PC-9 (cell line): ENCODE measurements at regions of chr22 and their contacts with region 1.

Region 1: DNA sequence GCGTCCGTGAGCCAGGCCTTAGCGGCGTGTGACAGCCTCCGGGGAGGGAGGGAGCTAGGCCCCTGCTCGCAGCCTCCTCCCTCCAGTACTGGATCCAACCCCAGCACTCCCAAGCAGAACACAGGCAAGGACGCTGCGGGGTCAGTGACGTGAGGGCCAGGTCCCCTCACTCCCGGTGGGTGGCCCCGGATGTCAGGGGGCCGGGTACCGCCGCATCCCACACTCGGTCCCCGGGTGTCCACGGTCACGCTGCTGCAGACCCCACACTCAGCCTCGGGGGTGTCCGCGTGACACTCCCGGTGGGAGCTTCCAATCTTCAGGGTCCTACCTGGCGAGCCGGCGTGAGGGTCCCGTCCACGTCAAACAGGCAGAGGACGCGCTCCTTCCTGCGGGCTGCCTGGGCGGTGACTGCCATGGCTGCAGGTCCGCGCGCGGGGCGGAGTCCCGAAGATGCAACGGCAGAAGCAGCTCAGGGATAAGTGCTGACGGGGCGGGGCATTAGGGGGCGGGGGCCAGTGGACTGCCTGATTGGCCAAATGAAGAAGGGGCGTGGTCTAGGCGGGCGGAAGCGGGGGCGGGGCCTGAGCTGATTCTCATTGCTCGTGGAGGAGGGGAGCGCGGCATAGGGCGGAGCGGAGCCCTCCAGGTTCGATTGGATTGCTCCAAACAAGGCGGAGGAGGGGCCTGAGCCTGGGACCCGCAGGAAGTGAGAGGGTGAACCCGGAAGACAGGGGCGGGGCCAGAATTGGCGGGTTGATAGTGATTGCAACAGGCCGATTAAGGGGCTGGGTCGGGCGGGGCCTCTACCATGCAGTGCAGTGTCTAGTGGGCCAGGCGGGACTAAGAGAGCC is at the start of gene PMM1:
- DNase-seq: peak; percentile 99 to 100
- H3K4me3 ChIP-seq: peak within 1 kb of the TSS; percentile 98
- H3K27ac ChIP-seq: peak within 1 kb of the TSS; percentile 37; the same call in 1 of the 2 replicates
- H3K4me1 ChIP-seq: peaks cover 18% of the 10 kb centered on the region
- H3K27me3 ChIP-seq: no peaks in the 10 kb centered on the region
- CTCF ChIP-seq: no peak
- total RNA-seq, gene PMM1: 49.3 and 53.1 TPM in 2 replicates

Region 2: GRCh38 chr22:41334215-41334614 is 255.4 kb before region 1 on chr22:
- CTCF ChIA-PET with region 1: interaction called, 14 read pairs
- POLR2A ChIA-PET with region 1: no interaction called
- intact Hi-C with region 1: no loop called
- DNase-seq: no peak
- H3K4me3 ChIP-seq: no peak overlapping the region
- H3K27ac ChIP-seq: no peak overlapping the region
- H3K4me1 ChIP-seq: no peaks in the 10 kb centered on the region
- H3K27me3 ChIP-seq: no peaks in the 10 kb centered on the region
- CTCF ChIP-seq: no peak

Region 3: DNA sequence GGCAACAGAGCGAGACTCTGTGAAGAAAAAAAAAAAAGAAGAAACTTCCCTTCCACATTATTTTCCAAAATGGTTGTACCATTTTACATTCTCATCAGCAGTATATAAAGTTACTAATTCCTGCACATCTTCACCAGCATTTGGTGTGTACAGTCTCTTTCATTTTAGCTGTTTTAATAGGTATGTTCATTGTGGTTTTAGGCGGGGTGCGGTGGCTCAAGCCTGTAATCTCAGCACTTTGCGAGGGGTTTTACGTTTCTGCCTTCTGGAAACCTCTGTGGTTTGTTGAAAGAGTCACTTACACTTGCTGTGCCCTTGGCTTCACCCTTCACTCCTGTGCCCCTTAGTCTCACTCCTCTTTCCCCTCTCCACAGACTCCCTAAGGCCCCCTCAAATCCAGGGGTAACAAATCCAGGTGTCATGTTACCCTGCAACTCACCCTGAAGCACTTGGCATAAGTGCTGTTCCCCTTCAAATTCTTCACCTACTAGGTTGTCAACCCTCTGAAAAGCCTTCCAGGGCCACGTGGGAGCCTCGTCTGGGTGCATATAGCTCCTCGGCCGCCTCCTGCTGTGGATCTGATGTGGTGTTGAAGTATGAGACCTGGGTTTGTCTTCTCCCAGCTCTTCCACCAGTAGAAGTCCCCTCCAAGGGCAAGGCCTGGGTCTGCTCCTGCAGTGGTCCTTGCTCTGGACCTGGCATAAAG is 163.8 kb before region 1 on chr22:
- CTCF ChIA-PET with region 1: interaction called, 19 read pairs
- POLR2A ChIA-PET with region 1: no interaction called
- intact Hi-C with region 1: no loop called
- DNase-seq: no peak
- H3K4me3 ChIP-seq: no peak overlapping the region
- H3K27ac ChIP-seq: no peak overlapping the region
- H3K4me1 ChIP-seq: no peaks in the 10 kb centered on the region
- H3K27me3 ChIP-seq: no peaks in the 10 kb centered on the region
- CTCF ChIP-seq: no peak

Region 4: GRCh38 chr22:41479671-41480396 is 109.8 kb before region 1 on chr22:
- CTCF ChIA-PET with region 1: no interaction called
- POLR2A ChIA-PET with region 1: no interaction called
- intact Hi-C with region 1: no loop called
- DNase-seq: no peak
- H3K4me3 ChIP-seq: no peak overlapping the region
- H3K27ac ChIP-seq: no peak overlapping the region
- H3K4me1 ChIP-seq: no peaks in the 10 kb centered on the region
- H3K27me3 ChIP-seq: no peaks in the 10 kb centered on the region
- CTCF ChIP-seq: no peak

Region 5: GRCh38 chr22:41565403-41566054 is 24.1 kb before region 1 on chr22:
- CTCF ChIA-PET with region 1: interaction called, 4 read pairs
- POLR2A ChIA-PET with region 1: interaction called, 18 read pairs
- intact Hi-C with region 1: no loop called
- DNase-seq: peak; percentile 71 to 73
- H3K4me3 ChIP-seq: no peak overlapping the region
- H3K27ac ChIP-seq: peak overlapping the region; percentile 43
- H3K4me1 ChIP-seq: peaks cover 38% of the 10 kb centered on the region
- H3K27me3 ChIP-seq: no peaks in the 10 kb centered on the region
- CTCF ChIP-seq: no peak

Region 6: DNA sequence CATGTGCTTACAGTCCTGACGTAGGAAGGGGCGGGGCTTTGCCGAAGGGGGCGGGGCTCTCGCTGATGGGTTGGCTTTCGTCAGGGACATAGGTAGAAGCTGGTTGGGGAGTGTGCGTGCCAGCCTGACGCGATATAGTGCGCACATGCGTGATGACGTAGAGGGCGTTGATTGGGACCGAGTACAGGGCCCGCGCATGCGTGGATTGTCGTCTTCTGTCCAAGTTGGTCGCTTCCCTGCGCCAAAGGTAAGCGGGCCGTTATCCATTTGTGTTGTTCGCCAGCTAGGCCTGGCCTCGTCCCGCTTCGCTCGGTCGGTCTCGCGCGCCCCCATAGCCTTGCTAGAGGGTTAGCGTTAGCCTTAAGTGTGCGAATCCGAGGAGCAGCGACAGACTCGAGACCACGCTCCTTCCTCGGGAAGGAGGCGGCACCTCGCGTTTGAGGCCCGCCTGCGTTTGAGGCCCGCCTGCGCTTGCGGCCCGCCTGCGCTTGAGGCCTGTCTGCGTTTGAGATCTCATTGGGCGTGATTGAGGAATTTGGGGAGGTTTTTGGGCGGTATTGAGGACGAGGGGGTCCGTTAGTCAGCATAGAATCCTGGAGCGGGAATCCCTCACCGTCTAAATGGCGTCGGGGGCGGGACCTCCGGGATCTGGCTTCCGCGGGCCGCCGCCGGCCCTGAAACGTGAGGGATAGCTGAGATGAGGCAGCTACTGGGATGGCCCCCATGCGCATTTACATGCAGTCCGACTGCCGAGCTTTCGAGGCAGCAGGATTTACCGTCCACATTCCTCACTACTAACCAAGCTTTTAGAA is 31.7 kb after region 1 on chr22 and contains the start of gene XRCC6:
- CTCF ChIA-PET with region 1: interaction called, 7 read pairs
- POLR2A ChIA-PET with region 1: interaction called, 37 read pairs
- intact Hi-C with region 1: loop called (anchors 1 kb)
- DNase-seq: peak; percentile 99 to 100
- H3K4me3 ChIP-seq: peak within 1 kb of the TSS; percentile 90
- H3K27ac ChIP-seq: peak within 1 kb of the TSS; percentile 79
- H3K4me1 ChIP-seq: peaks cover 33% of the 10 kb centered on the region
- H3K27me3 ChIP-seq: no peaks in the 10 kb centered on the region
- CTCF ChIP-seq: no peak
- total RNA-seq, gene XRCC6: 386 and 486 TPM in 2 replicates

Region 7: DNA sequence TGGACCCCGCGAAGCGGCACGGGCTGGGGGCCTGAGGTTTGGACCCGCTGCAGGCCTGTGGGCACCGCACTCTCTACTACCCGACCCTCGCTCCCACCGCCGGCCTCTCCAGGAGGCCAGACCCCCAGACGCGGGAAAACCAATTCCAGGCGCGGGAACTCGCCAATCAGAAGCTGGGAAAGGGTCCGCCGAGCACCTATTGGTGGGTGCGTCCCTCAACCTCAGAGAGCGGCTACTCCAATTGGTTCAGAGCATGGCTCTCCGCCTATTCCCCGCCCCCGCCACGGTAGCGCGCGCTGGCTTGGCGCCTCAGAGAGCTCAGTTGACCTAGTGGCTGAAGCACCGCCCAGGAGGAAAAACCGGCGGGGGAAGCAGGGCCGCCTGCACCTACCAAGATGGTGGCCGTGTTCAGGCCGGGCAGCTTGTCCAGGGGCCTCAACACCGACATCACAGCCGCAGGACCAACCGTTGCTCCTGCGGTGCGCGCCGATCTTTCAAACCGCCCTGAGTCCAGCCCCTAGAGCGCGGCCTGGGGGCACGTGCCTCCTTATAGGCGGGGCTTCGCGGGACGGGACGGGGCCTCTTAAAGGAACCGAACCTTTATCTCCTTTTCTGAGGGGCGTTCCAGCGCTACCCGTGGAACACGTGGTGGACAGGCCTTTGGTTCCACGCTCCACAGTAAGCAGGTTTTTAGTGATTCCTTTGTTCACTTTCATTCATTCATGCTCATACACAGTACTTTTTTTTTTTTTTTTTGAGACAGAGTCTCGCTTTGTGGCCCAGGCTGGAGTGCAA is 357.2 kb after region 1 on chr22 and contains the start of gene CENPM:
- CTCF ChIA-PET with region 1: no interaction called
- POLR2A ChIA-PET with region 1: no interaction called
- intact Hi-C with region 1: no loop called
- DNase-seq: peak; percentile 92 to 95
- H3K4me3 ChIP-seq: peak within 1 kb of the TSS; percentile 73
- H3K27ac ChIP-seq: no peak within 1 kb of the TSS
- H3K4me1 ChIP-seq: peaks cover 18% of the 10 kb centered on the region
- H3K27me3 ChIP-seq: no peaks in the 10 kb centered on the region
- CTCF ChIP-seq: no peak
- total RNA-seq, gene CENPM: 42.0 and 53.8 TPM in 2 replicates